Posterior vena cava (tissue), 2 donors: ENCODE measurements at regions of chr10 and their contacts with region 1.

Region 1: DNA sequence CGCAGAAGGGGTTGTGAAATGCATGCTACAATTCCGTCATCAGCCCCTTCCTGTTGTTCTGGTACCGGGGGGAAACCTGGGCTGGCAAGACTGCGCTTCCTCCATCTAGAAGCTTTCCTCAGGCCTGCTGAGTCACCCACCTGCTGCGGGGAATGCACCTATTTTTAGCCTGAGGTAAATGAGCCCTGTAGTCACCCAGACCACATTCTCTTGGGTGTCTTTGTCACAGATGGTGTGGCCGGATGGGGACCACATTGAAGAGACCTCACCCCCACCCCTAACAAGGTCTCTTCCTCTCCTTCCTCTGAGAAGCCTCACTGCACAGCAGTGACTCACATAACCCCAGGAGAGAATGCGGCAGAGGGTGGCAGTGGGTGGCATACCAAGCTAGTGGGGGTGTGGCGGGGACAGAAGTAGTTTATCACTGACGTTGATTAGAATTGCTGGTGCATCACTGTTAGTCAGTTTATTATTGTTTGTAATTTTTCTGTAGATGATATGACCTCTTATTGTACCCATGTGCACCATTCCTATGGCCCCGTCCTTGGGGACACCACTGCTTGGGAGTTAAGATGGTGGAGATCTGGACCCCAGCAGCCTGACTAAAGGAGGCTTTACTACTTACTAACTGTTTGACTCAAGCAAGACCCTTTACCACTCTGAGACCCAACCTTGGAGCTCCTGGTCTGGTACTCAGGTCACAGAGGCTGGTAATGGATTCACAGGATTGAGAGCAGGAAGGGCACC is 83.0 kb upstream of the DUSP5 start:
- DNase-seq: no peak

Region 2: GRCh38 chr10:110497438-110498086 is 82.8 kb after region 1 on chr10 and contains the start of gene DUSP5:
- intact Hi-C with region 1: loop called in 1 of 2 experiments (anchors 10 kb)
- DNase-seq: peak; percentile 99
- total RNA-seq, gene DUSP5: 8.5 to 23.2 TPM